ENCODE measurements at regions of chr9 and their contacts with region 1.

Region 1: DNA sequence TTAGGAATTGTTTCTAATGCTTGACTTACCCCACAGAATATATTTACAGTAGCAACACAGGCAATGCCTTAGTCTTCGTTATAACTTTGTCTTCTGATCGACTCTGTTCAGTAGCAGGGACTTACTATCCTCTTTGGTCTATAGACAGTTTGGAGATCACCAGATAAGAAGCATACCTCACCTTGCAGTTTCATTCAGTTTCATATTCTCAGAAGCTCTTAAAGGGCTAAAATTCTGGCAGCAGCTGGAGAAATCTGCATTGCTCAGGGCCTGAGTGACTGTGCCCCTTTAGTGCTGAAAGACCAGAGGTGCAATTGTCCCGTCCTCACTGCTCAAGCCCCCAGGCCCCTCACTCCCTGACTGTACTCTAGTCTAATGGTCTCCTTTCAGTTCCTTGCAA is 26.0 kb downstream of the ZBTB43 start:
- DNase-seq: no peak
- ATAC-seq: no peak
- H3K4me3 ChIP-seq: no peak overlapping the region
- H3K27ac ChIP-seq: no peak overlapping the region
- H3K4me1 ChIP-seq: no peaks in the 10 kb centered on the region
- H3K27me3 ChIP-seq: no peaks in the 10 kb centered on the region
- CTCF ChIP-seq: no peak

Region 2: GRCh38 chr9:126347911-126348760 is 482.7 kb before region 1 on chr9:
- CTCF ChIA-PET with region 1: no interaction called
- POLR2A ChIA-PET with region 1: no interaction called
- intact Hi-C with region 1: no loop called
- DNase-seq: no peak
- ATAC-seq: no peak
- H3K4me3 ChIP-seq: no peak overlapping the region
- H3K27ac ChIP-seq: peak overlapping the region; percentile 38
- H3K4me1 ChIP-seq: peaks cover 29% of the 10 kb centered on the region
- H3K27me3 ChIP-seq: no peaks in the 10 kb centered on the region
- CTCF ChIP-seq: no peak

Region 3: DNA sequence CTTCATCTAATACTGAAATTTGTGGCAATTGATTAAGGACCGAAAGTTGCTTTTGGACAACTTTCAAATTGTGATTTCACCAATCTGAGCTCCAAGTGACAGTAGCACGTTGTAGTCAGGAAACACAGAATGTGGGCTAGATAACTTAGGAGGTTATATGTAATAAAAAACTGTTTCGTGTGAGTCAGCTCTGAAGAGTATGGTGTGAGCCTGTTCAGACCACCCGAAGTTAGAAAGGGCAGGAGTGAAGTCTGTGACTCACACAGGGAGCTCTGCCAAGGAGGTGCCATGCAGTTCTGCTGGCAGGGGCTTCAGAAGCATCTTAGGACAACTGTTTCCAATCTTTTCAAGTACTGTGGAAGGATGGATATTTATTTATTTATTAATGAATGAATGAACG is 13.3 kb after region 1 on chr9:
- CTCF ChIA-PET with region 1: no interaction called
- POLR2A ChIA-PET with region 1: interaction called, 12 read pairs
- intact Hi-C with region 1: no loop called
- DNase-seq: peak; percentile 82
- ATAC-seq: peak; percentile 96
- H3K4me3 ChIP-seq: 0 out of 2 replicates have a peak overlapping the region, but pooled peaks have one; percentile 4
- H3K27ac ChIP-seq: peak overlapping the region; percentile 28; the same call in 1 of the 2 replicates
- H3K4me1 ChIP-seq: peaks cover 9% of the 10 kb centered on the region
- H3K27me3 ChIP-seq: no peaks in the 10 kb centered on the region
- CTCF ChIP-seq: no peak

Region 4: DNA sequence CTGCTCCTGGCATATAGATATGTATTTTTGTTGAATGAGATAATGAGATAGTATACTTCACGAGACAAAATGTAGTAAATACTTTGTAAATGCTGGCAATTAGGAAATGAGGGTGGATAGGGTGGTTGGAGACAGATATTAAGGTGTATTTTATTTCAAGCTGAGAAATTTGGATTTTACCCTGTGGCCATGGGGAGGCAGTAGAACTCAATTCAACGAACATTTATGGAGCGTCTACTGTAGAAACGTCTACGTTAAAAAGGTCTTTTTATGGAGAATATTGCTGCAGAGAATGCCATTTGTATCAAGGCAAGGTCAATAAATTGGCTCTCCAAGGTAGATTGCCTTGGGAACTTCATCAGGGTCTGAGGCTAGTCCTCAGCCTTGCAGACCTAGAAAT is 62.3 kb after region 1 on chr9:
- CTCF ChIA-PET with region 1: no interaction called
- POLR2A ChIA-PET with region 1: no interaction called
- intact Hi-C with region 1: no loop called
- DNase-seq: peak; percentile 13
- ATAC-seq: no peak
- H3K4me3 ChIP-seq: no peak overlapping the region
- H3K27ac ChIP-seq: no peak overlapping the region
- H3K4me1 ChIP-seq: 0 out of 2 replicates have a peak, but pooled peaks cover 4% of the 10 kb centered on the region
- H3K27me3 ChIP-seq: no peaks in the 10 kb centered on the region
- CTCF ChIP-seq: peak; percentile 51